Mammary epithelial cell (primary cell): ENCODE measurements at regions of chr4 and their contacts with region 1.

Region 1: GRCh38 chr4:84673475-84674240 is 90.7 kb downstream of the CDS1 start:
- DNase-seq: peak; percentile 76
- H3K4me3 ChIP-seq: no peak overlapping the region
- H3K27ac ChIP-seq: peak overlapping the region; percentile 21
- H3K4me1 ChIP-seq: peaks cover 18% of the 10 kb centered on the region
- H3K27me3 ChIP-seq: no peaks in the 10 kb centered on the region
- CTCF ChIP-seq: no peak

Region 2: GRCh38 chr4:84639145-84639544 is 34.5 kb before region 1 on chr4:
- CTCF ChIA-PET with region 1: no interaction called
- dilution Hi-C with region 1: loop called (anchors 5 kb)
- in situ Hi-C with region 1: no loop called
- intact Hi-C with region 1: no loop called
- DNase-seq: no peak
- H3K4me3 ChIP-seq: no peak overlapping the region
- H3K27ac ChIP-seq: no peak overlapping the region
- H3K4me1 ChIP-seq: peaks cover 9% of the 10 kb centered on the region
- H3K27me3 ChIP-seq: no peaks in the 10 kb centered on the region
- CTCF ChIP-seq: no peak

Region 3: DNA sequence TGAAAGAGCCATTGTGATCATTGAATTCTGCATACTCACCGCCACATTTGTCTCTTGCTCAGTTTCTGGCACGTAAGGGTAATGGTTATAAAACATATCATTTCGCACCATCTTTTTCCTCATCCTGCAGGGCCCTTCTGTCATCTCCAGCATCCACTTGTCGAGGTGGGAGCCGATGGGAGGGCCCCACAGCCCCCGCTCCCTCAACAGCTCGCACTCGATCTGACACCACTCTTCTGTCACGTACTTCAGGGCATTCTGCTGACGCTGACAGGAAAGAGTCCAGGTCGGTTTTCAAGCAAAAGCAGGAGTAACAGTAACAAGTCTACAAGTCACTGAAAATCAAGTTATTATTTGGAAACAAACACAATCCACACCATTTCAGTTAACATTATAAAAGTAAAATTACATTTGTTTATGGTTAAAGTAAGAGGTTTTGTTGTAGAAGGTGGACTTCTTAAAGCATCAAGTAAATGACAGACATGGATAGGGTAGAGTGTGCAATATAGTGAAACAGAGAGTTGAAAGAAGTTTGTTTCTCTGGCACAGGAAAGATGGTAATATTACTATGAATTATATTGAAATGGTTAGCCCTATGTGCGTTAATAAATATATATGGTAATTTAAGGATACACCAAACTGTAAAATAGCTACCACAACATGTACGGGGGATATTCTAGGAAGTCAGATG is 59.8 kb after region 1 on chr4:
- CTCF ChIA-PET with region 1: no interaction called
- dilution Hi-C with region 1: no loop called
- in situ Hi-C with region 1: no loop called
- intact Hi-C with region 1: no loop called
- DNase-seq: no peak
- H3K4me3 ChIP-seq: no peak overlapping the region
- H3K27ac ChIP-seq: no peak overlapping the region
- H3K4me1 ChIP-seq: no peaks in the 10 kb centered on the region
- H3K27me3 ChIP-seq: no peaks in the 10 kb centered on the region
- CTCF ChIP-seq: no peak